Ovary (tissue), 10 donors: ENCODE measurements at regions of chr3 and their contacts with region 1.

Region 1: GRCh38 chr3:73056014-73056844 is 5.2 kb upstream of the EBLN2 start:
- DNase-seq: no peak
- H3K4me3 ChIP-seq: no peak overlapping the region
- H3K27ac ChIP-seq: no peak overlapping the region
- H3K4me1 ChIP-seq: peaks cover 2% of the 10 kb centered on the region
- H3K27me3 ChIP-seq: no peaks in the 10 kb centered on the region
- CTCF ChIP-seq: peak in 2 of 3 donors; percentile 51 to 63
- EP300 ChIP-seq: no peak
- POLR2A ChIP-seq: no peak

Region 2: GRCh38 chr3:72847751-72848702 is 208.2 kb before region 1 on chr3 and contains the start of gene SHQ1:
- intact Hi-C with region 1: loop called in 1 of 4 experiments (anchors 10 kb)
- DNase-seq: peak; percentile 96 to 97 (median 96)
- H3K4me3 ChIP-seq: peak within 1 kb of the TSS; percentile 82
- H3K27ac ChIP-seq: peak within 1 kb of the TSS in 1 of 2 donors; percentile 40
- H3K4me1 ChIP-seq: peaks cover 6% of the 10 kb centered on the region
- H3K27me3 ChIP-seq: no peaks in the 10 kb centered on the region
- CTCF ChIP-seq: no peak
- EP300 ChIP-seq: no peak
- POLR2A ChIP-seq: peak; percentile 39
- total RNA-seq, gene SHQ1: 9.7 to 30.0 (median 18.2) TPM

Region 3: GRCh38 chr3:72938471-72939265 is 117.6 kb before region 1 on chr3:
- intact Hi-C with region 1: loop called in 1 of 4 experiments (anchors 10 kb)
- DNase-seq: peak; percentile 57 to 91 (median 73)
- H3K4me3 ChIP-seq: no peak overlapping the region
- H3K27ac ChIP-seq: peak overlapping the region in 1 of 2 donors; percentile 80
- H3K4me1 ChIP-seq: peaks cover 3% of the 10 kb centered on the region
- H3K27me3 ChIP-seq: no peaks in the 10 kb centered on the region
- CTCF ChIP-seq: peak; percentile 24 to 97 (median 90)
- EP300 ChIP-seq: peak; percentile 92
- POLR2A ChIP-seq: no peak

Region 4: GRCh38 chr3:72996473-72997333 is 59.5 kb before region 1 on chr3 and contains the start of gene PPP4R2:
- intact Hi-C with region 1: loop called in 1 of 4 experiments (anchors 10 kb)
- DNase-seq: peak; percentile 86 to 94 (median 89)
- H3K4me3 ChIP-seq: peak within 1 kb of the TSS; percentile 74
- H3K27ac ChIP-seq: peak within 1 kb of the TSS; percentile 89 to 90
- H3K4me1 ChIP-seq: peaks cover 5% of the 10 kb centered on the region
- H3K27me3 ChIP-seq: no peaks in the 10 kb centered on the region
- CTCF ChIP-seq: no peak
- EP300 ChIP-seq: no peak
- POLR2A ChIP-seq: peak; percentile 95
- total RNA-seq, gene PPP4R2: 57.5 to 95.1 (median 81.6) TPM